Activated CD4-positive, alpha-beta memory T cell treated with anti-CD3 and anti-CD28 coated beads for 36 hours (primary cell): ENCODE measurements at regions of chr19 and their contacts with region 1.

Region 1: DNA sequence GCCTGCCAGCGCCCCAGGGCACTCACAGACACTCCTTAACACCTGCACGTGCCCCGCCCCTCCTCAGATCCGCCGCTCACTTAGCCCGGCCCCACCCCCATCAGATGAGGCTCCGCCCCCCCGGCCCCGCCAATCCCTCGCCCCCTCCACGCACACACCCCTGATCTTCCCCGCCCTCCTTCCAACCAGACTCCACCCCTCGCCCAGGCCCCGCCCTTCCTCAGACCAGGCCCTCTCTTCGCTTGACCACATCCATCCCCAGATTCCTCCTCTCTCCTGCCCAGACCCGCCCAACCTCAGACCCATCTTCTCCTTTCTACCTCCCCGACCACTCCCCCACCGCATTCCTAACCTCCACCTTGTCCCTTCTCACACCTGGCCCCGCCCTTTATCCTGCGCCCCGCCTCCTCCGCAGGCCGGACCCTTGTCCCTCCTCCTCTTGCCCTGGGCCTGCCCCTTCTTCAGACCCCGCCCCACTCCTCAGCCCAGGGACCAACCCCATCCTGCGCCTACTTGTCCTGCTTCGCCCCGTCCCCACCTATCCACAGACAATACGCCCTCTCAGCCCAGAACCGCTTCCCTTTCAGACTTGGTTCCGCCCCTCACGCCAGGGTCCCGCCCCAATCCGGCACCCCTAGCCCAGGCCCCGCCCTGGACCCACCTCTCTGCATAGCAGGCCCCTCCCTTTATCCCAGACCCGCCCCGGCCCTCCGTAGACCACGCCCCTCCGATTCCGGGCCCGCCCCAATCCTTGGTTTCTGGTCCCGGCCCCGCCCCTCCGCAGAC is 452 bp upstream of the KLHL26 start:
- DNase-seq: peak; percentile 99
- H3K4me3 Mint-ChIP-seq: peak overlapping the region; percentile 82
- H3K27ac Mint-ChIP-seq: peak overlapping the region; percentile 74
- H3K4me1 Mint-ChIP-seq: peaks cover 22% of the 10 kb centered on the region
- H3K27me3 Mint-ChIP-seq: no peaks in the 10 kb centered on the region

Region 2: DNA sequence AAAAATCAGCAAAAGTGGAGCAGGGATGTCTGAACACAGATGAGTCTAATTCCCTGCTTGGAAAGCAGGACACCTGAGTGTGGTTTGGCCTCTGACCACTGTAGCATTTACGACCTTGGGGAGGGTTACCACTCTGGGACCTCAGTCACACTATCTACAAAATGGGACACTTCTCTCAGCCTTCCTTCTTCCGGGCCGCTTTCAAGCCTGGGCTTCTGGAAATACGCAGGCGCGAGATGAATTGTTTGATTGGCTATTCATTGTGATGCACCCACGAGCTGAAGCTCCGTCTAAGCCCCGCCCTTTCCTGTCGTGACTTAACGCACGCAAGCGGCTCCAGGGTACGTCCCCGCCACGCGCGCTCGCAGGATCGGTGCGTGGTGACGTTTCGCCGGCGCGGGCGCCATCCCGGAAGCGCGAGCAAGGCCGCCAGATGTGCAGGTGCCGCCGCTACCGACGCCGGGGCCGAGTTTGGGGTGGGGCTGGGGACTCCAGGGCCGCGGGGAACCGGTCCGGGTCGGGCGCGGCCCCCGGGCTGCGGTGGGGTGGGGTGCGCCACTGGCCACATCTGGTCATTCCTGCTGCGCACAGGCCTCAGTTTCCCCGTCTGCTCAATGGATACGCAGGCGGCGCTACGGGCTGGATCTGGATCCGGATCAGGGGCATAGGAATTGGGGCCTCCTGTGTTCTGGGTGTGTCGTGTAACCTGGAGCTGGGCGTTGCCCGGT is 78.7 kb before region 1 on chr19 and contains the start of gene KXD1:
- CTCF ChIA-PET with region 1: no interaction called
- POLR2A ChIA-PET with region 1: no interaction called
- intact Hi-C with region 1: loop called (anchors 1 kb)
- DNase-seq: peak; percentile 99
- H3K4me3 Mint-ChIP-seq: peak within 1 kb of the TSS; percentile 86
- H3K27ac Mint-ChIP-seq: peak within 1 kb of the TSS; percentile 94
- H3K4me1 Mint-ChIP-seq: peaks cover 13% of the 10 kb centered on the region
- H3K27me3 Mint-ChIP-seq: no peaks in the 10 kb centered on the region
- total RNA-seq, gene KXD1: 112 to 114 TPM

Region 3: DNA sequence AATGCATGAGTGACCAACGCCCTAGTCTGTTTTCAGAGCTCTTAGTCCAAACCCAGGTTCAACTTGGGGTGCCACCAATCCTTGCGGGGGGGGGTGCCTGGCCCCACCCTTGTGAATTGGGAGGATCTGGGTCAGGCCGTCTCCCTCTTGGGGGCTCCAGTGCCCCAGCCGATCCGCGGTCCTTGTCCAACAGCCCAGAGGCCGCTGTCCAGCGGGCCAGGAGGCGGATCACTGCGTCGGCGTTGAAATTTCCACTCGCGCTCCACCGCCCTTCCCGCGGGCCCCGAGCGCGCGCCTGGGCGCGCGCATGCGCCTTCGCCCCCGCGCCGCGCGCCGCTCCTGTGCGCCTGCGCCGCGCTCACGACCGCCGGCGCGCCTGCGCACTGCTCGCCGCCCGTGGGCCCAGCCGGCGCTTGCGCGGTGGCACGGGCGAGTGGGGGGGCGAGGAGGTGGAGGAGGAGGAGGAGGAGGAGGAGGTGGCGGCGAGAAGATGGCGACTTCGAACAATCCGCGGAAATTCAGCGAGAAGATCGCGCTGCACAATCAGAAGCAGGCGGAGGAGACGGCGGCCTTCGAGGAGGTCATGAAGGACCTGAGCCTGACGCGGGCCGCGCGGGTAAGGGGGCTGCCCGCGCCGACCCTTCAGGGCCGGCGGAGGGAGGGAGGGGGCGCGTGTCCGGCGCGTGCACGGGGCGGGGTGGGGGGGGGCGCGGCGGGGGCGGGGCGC is 47.0 kb after region 1 on chr19 and contains the start of gene CRTC1:
- CTCF ChIA-PET with region 1: no interaction called
- POLR2A ChIA-PET with region 1: no interaction called
- intact Hi-C with region 1: loop called (anchors 1 kb)
- DNase-seq: peak; percentile 94
- H3K4me3 Mint-ChIP-seq: peak within 1 kb of the TSS; percentile 87
- H3K27ac Mint-ChIP-seq: peak within 1 kb of the TSS; percentile 88
- H3K4me1 Mint-ChIP-seq: peaks cover 17% of the 10 kb centered on the region
- H3K27me3 Mint-ChIP-seq: no peaks in the 10 kb centered on the region
- total RNA-seq, gene CRTC1: 5.6 to 6.3 TPM

Region 4: GRCh38 chr19:18831524-18832305 is 195.3 kb after region 1 on chr19 and contains the start of gene UPF1:
- CTCF ChIA-PET with region 1: no interaction called
- POLR2A ChIA-PET with region 1: no interaction called
- intact Hi-C with region 1: loop called (anchors 5 kb)
- DNase-seq: peak; percentile 96
- H3K4me3 Mint-ChIP-seq: peak within 1 kb of the TSS; percentile 96
- H3K27ac Mint-ChIP-seq: peak within 1 kb of the TSS; percentile 93
- H3K4me1 Mint-ChIP-seq: peaks cover 31% of the 10 kb centered on the region
- H3K27me3 Mint-ChIP-seq: no peaks in the 10 kb centered on the region
- total RNA-seq, gene UPF1: 71.7 to 77.2 TPM

Region 5: GRCh38 chr19:19063183-19064097 is 427.1 kb after region 1 on chr19 and contains the start of gene SLC25A42:
- CTCF ChIA-PET with region 1: no interaction called
- POLR2A ChIA-PET with region 1: no interaction called
- intact Hi-C with region 1: loop called (anchors 1 kb)
- DNase-seq: peak; percentile 99
- H3K4me3 Mint-ChIP-seq: peak within 1 kb of the TSS; percentile 79
- H3K27ac Mint-ChIP-seq: peak within 1 kb of the TSS; percentile 72
- H3K4me1 Mint-ChIP-seq: peaks cover 31% of the 10 kb centered on the region
- H3K27me3 Mint-ChIP-seq: no peaks in the 10 kb centered on the region
- total RNA-seq, gene SLC25A42: 12.2 to 12.4 TPM